ENCODE measurements at regions of chr1 and their contacts with region 1.

Region 1: DNA sequence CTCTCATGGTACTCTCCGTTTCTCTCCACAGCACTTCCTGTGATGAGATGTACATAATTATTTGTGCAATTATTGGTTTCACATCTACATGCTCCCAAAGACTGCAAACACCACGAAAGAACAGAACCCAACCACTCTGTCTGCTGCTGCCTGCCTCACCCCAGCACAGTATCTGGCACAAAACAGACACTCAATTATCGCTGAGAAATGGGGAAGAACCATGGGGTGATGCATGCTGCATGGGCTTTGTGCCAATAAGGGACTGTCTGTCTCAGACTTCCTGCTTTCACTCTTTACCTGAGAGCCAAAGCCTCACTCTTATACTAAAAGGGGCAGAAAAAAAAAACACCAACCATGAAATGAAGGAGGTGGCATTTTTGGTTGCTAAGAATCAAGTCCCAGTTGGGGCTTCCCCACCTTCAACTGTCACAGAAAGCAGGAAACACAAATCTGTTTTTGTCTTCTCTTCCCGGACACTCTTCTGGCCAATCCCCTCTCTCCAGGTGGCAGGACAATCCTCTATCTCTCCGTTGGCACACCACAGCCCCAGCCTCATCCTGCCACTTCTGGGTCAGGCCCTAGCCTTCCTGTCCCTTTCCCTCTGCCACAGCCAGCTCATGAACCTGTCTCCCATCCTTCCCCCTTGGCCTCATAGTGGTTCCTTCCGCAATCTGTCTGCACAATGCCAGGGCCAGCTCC is 82.0 kb downstream of the TGFBR3 start:
- DNase-seq: peak; percentile 41 to 93 (median 90)
- ATAC-seq: peak; percentile 69
- H3K4me3 ChIP-seq: peak overlapping the region; percentile 48
- H3K4me3 Mint-ChIP-seq: peak overlapping the region; percentile 67 to 90 (median 78)
- H3K27ac ChIP-seq: peak overlapping the region; percentile 99
- H3K27ac Mint-ChIP-seq: peak overlapping the region; percentile 96 to 100 (median 98)
- H3K4me1 ChIP-seq: peaks cover 27 to 33% of the 10 kb centered on the region in 2 donors
- H3K4me1 Mint-ChIP-seq: peaks cover 34 to 71% (median 49%) of the 10 kb centered on the region in 7 donors
- H3K27me3 ChIP-seq: no peaks in the 10 kb centered on the region
- H3K27me3 Mint-ChIP-seq: peaks cover 0 to 15% (median 0%) of the 10 kb centered on the region in 5 donors

Region 2: GRCh38 chr1:91500756-91501522 is 303.1 kb before region 1 on chr1 and contains the start of gene CDC7:
- CTCF ChIA-PET with region 1: no interaction called
- POLR2A ChIA-PET with region 1: interaction called, 4 read pairs
- intact Hi-C with region 1: loop called (anchors 1 kb)
- DNase-seq: peak; percentile 67 to 86 (median 79)
- ATAC-seq: peak; percentile 85
- H3K4me3 ChIP-seq: peak within 1 kb of the TSS; percentile 97
- H3K4me3 Mint-ChIP-seq: no peak within 1 kb of the TSS
- H3K27ac ChIP-seq: peak within 1 kb of the TSS; percentile 85
- H3K27ac Mint-ChIP-seq: no peak within 1 kb of the TSS
- H3K4me1 ChIP-seq: peaks cover 0 to 11% of the 10 kb centered on the region in 2 donors
- H3K4me1 Mint-ChIP-seq: peaks cover 14 to 34% (median 18%) of the 10 kb centered on the region in 7 donors
- H3K27me3 ChIP-seq: no peaks in the 10 kb centered on the region
- H3K27me3 Mint-ChIP-seq: no peaks in the 10 kb centered on the region
- total RNA-seq, gene CDC7: 5.3 to 17.9 (median 5.9) TPM

Region 3: DNA sequence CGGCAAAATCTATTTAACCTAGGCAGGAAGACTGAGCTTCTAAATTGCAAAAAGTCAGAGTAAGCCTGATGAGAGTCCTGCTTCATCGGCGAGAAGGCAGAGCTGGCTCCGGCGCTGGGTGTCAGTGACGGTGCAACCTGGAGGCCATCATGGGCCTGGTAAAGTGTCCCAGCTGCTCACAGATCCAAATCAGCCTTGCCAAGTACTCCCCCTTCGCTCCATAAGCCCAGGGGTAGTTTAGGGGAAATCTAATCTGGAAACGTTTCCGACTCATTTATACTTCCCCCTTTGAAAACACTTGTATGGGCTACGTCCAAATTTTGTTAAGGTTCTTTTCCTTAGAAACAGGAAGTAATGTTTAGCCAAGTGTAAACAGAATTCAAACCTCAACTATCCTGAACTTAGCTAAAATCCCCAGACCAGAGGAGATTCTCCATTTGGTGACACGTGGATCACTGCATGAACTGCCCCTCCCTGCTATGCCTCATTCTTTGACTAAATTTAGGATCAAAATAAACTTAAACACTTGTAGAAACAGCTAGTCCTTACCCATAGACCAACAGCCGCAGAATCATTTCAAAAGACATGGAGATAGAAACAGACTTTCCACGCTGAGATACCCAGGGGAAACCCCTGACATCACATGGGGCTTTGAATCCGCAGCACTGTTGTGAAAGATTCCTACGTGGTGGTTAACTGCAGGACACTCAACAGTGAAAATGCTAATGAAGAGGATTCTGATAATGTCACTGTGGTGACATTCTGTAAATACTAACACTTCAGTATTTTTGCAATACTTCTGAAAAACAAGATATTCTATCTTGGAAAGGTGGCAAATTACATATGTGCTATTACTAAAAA is 90.8 kb before region 1 on chr1:
- CTCF ChIA-PET with region 1: no interaction called
- POLR2A ChIA-PET with region 1: no interaction called
- intact Hi-C with region 1: loop called in 1 of 2 experiments (anchors 1 kb)
- DNase-seq: peak in 1 of 9 donors; percentile 60
- ATAC-seq: peak; percentile 86
- H3K4me3 ChIP-seq: no peak overlapping the region
- H3K4me3 Mint-ChIP-seq: peak overlapping the region in 3 of 10 donors; percentile 37 to 57 (median 48)
- H3K27ac ChIP-seq: no peak overlapping the region
- H3K27ac Mint-ChIP-seq: peak overlapping the region in 3 of 9 donors; percentile 24 to 71 (median 66)
- H3K4me1 ChIP-seq: peaks cover 0 to 16% of the 10 kb centered on the region in 2 donors
- H3K4me1 Mint-ChIP-seq: peaks cover 0 to 48% (median 11%) of the 10 kb centered on the region in 7 donors
- H3K27me3 ChIP-seq: no peaks in the 10 kb centered on the region
- H3K27me3 Mint-ChIP-seq: no peaks in the 10 kb centered on the region

Region 4: GRCh38 chr1:91885716-91886506 is 81.9 kb after region 1 on chr1 and contains the start of gene TGFBR3:
- CTCF ChIA-PET with region 1: interaction called, 4 read pairs
- POLR2A ChIA-PET with region 1: interaction called, 6 read pairs
- intact Hi-C with region 1: loop called (anchors 1 kb)
- DNase-seq: peak; percentile 61 to 79 (median 73)
- ATAC-seq: peak; percentile 84
- H3K4me3 ChIP-seq: peak within 1 kb of the TSS; percentile 54
- H3K4me3 Mint-ChIP-seq: peak within 1 kb of the TSS; percentile 86 to 99 (median 94)
- H3K27ac ChIP-seq: peak within 1 kb of the TSS; percentile 68
- H3K27ac Mint-ChIP-seq: peak within 1 kb of the TSS; percentile 78 to 94 (median 85)
- H3K4me1 ChIP-seq: peaks cover 12 to 15% of the 10 kb centered on the region in 2 donors
- H3K4me1 Mint-ChIP-seq: peaks cover 21 to 43% (median 27%) of the 10 kb centered on the region in 7 donors
- H3K27me3 ChIP-seq: no peaks in the 10 kb centered on the region
- H3K27me3 Mint-ChIP-seq: peaks cover 0 to 42% (median 0%) of the 10 kb centered on the region in 5 donors
- total RNA-seq, gene TGFBR3: 10.1 to 36.3 (median 18.5) TPM

Region 5: GRCh38 chr1:91948501-91949355 is 144.7 kb after region 1 on chr1:
- CTCF ChIA-PET with region 1: no interaction called
- POLR2A ChIA-PET with region 1: no interaction called
- intact Hi-C with region 1: no loop called
- DNase-seq: peak in 7 of 9 donors; percentile 39 to 67 (median 53)
- ATAC-seq: peak; percentile 84
- H3K4me3 ChIP-seq: peak overlapping the region; percentile 28
- H3K4me3 Mint-ChIP-seq: peak overlapping the region; percentile 11 to 72 (median 55)
- H3K27ac ChIP-seq: no peak overlapping the region
- H3K27ac Mint-ChIP-seq: peak overlapping the region; percentile 14 to 91 (median 80)
- H3K4me1 ChIP-seq: peaks cover 6 to 22% of the 10 kb centered on the region in 2 donors
- H3K4me1 Mint-ChIP-seq: peaks cover 6 to 18% (median 15%) of the 10 kb centered on the region in 7 donors
- H3K27me3 ChIP-seq: no peaks in the 10 kb centered on the region
- H3K27me3 Mint-ChIP-seq: no peaks in the 10 kb centered on the region

Region 6: DNA sequence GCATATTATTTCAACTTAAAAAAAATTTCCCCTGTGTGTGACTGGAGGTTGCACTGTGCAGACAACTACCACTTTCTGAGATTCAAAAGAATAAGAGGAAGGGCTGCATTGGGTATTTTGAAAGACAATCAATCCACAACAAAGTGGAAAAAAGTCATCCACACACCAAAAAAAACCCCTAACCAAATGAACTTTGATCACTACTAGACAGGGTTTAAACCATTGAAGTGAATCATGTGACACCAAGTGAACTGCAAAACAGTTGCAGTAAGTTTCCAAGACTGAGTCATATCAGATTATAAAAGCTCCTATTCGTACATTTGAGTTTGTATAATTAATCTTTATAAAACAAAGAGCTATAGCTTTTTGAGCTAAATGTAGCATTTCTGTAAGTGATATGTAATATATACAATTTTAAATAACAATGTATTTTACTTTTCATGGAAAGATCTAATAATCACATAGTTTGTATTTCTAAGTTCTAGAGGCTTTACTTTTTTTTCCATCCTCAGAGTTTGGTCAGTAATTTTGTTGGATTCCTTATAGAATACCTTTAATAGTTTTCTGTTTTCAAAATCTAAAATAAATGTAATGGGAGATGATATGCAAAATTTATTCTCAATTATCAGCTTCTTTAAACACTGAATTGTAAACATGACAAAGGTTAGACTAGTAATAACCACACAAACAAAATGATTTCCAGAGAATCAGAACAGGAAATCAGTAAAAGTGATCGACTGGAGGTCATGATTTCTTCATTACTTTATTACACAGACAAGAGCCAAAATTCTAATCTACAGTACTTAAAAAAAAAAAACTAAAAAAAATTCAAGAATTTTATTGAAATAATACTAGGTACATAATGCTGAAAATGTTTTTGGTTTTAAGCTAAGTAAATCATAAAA is 733.2 kb after region 1 on chr1:
- CTCF ChIA-PET with region 1: no interaction called
- POLR2A ChIA-PET with region 1: no interaction called
- intact Hi-C with region 1: loop called in 1 of 2 experiments (anchors 2 kb)
- DNase-seq: peak in 7 of 9 donors; percentile 57 to 80 (median 74)
- ATAC-seq: peak; percentile 90
- H3K4me3 ChIP-seq: peak overlapping the region; percentile 15
- H3K4me3 Mint-ChIP-seq: peak overlapping the region; percentile 51 to 87 (median 81)
- H3K27ac ChIP-seq: peak overlapping the region; percentile 68
- H3K27ac Mint-ChIP-seq: peak overlapping the region; percentile 81 to 97 (median 91)
- H3K4me1 ChIP-seq: peaks cover 24 to 25% of the 10 kb centered on the region in 2 donors
- H3K4me1 Mint-ChIP-seq: peaks cover 19 to 84% (median 75%) of the 10 kb centered on the region in 7 donors
- H3K27me3 ChIP-seq: no peaks in the 10 kb centered on the region
- H3K27me3 Mint-ChIP-seq: no peaks in the 10 kb centered on the region

Region 7: GRCh38 chr1:93179886-93180722 is 1376.1 kb after region 1 on chr1 and contains the start of gene TMED5:
- CTCF ChIA-PET with region 1: no interaction called
- POLR2A ChIA-PET with region 1: no interaction called
- intact Hi-C with region 1: loop called in 1 of 2 experiments (anchors 1 kb)
- DNase-seq: peak; percentile 94 to 97 (median 96)
- ATAC-seq: peak; percentile 89
- H3K4me3 ChIP-seq: peak within 1 kb of the TSS; percentile 95
- H3K4me3 Mint-ChIP-seq: peak within 1 kb of the TSS; percentile 91 to 98 (median 94)
- H3K27ac ChIP-seq: peak within 1 kb of the TSS; percentile 91
- H3K27ac Mint-ChIP-seq: peak within 1 kb of the TSS; percentile 86 to 99 (median 97)
- H3K4me1 ChIP-seq: peaks cover 24 to 30% of the 10 kb centered on the region in 2 donors
- H3K4me1 Mint-ChIP-seq: peaks cover 30 to 59% (median 47%) of the 10 kb centered on the region in 7 donors
- H3K27me3 ChIP-seq: no peaks in the 10 kb centered on the region
- H3K27me3 Mint-ChIP-seq: no peaks in the 10 kb centered on the region
- total RNA-seq, gene TMED5: 37.8 to 60.0 (median 47.4) TPM

Measured in naive thymus-derived CD4-positive, alpha-beta T cell (primary cell).